GM12878 (cell line): ENCODE measurements at regions of chr7 and their contacts with region 1.

Region 1: GRCh38 chr7:129210256-129210988 is 14.4 kb upstream of the AHCYL2 start:
- DNase-seq: no peak
- ATAC-seq: peak; percentile 97
- H3K4me3 ChIP-seq: no peak overlapping the region
- H3K27ac ChIP-seq: no peak overlapping the region
- H3K4me1 ChIP-seq: no peaks in the 10 kb centered on the region
- H3K27me3 ChIP-seq: no peaks in the 10 kb centered on the region
- CTCF ChIP-seq: peak; percentile 86 to 94 (median 91)
- EP300 ChIP-seq: no peak
- POLR2A ChIP-seq: no peak
- RAD21 ChIP-seq: peak; percentile 97

Region 2: DNA sequence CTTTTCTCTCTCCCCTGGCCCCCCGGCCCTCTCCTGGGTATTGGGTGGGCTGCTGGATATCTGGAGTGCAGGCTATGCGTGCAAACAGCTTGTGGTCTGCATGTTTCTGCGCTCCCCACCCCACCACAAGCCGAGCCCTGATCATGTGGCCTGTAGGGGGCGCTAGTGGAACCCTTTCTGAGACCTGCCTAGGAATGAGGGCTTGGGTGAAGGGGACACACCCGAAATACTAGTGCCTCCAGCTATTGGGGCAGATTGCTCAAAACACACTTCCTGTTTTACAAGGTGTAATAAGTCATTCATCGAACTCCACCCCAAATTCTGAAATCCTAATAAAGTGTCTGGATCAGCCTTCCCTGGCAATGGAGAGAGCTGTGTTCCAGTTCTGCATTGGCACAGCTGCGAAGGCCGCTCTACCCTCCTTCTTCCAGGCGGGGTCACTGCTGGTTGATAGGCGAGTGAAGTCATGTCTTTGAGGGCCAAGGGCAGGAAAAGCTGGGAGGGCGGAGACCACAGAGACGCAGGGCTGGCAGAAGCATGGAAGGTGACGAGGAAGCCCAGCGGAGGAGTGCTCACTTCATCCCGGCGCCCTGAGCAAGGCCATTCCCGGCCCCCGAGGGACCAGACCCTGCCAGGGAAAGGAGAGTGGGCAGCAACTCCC is 829.1 kb before region 1 on chr7:
- CTCF ChIA-PET with region 1: no interaction called
- POLR2A ChIA-PET with region 1: no interaction called
- RAD21 ChIA-PET with region 1: no interaction called
- SMC1A ChIA-PET with region 1: no interaction called
- in situ Hi-C with region 1: no loop called
- intact Hi-C with region 1: no loop called
- DNase-seq: no peak
- ATAC-seq: peak; percentile 72
- H3K4me3 ChIP-seq: no peak overlapping the region
- H3K27ac ChIP-seq: no peak overlapping the region
- H3K4me1 ChIP-seq: no peaks in the 10 kb centered on the region
- H3K27me3 ChIP-seq: no peaks in the 10 kb centered on the region
- CTCF ChIP-seq: peak; percentile 28 to 71 (median 56)
- EP300 ChIP-seq: no peak
- POLR2A ChIP-seq: no peak
- RAD21 ChIP-seq: 0 out of 2 replicates have a peak, but pooled peaks have one; percentile 2

Region 3: DNA sequence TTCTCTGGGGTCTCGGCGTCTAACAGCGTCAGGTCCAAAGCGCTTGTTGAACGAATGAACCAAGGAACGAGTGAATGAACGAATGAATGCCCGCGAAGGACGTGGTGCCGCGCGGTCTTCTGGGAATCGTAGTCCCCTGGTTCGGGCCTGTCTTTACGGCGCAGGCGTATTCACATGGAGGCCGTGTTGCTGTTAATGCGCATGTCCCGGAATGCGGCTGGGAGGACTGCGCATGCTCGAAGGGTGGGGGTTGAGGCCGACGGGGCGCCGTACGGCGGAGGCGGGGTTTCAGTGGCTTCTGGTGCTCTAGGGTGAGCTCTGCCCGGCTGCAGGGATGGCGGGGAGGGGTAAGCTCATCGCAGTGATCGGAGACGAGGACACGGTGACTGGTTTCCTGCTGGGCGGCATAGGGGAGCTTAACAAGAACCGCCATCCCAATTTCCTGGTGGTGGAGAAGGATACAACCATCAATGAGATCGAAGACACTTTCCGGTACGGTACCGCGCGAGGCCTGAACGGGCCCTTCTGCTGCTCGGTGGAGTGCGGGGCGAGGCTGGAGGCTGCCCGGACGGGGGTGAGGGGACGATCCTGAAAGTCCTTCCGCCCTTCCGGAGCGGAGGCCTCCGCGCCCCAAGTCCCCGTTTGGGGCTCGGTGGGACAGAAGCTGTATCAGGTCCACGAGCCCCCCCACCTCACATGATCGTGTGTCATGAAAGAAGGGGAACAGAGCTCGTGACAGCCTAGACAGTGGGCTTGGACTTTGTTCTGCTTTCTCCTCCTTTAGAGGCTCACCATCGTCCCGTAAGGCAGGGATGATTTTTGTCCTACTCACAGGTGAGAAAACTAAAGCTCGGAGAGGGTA is 347.6 kb before region 1 on chr7 and contains the start of gene ATP6V1F:
- CTCF ChIA-PET with region 1: interaction called, 6 read pairs
- POLR2A ChIA-PET with region 1: no interaction called
- RAD21 ChIA-PET with region 1: interaction called, 3 read pairs
- SMC1A ChIA-PET with region 1: interaction called, 5 read pairs
- in situ Hi-C with region 1: no loop called
- intact Hi-C with region 1: loop called (anchors 1 kb)
- DNase-seq: peak; percentile 97
- ATAC-seq: peak; percentile 93
- H3K4me3 ChIP-seq: peak within 1 kb of the TSS; percentile 84
- H3K27ac ChIP-seq: peak within 1 kb of the TSS; percentile 62
- H3K4me1 ChIP-seq: peaks cover 8% of the 10 kb centered on the region; the same call in 1 of the 2 replicates
- H3K27me3 ChIP-seq: no peaks in the 10 kb centered on the region
- CTCF ChIP-seq: no peak
- EP300 ChIP-seq: no peak
- POLR2A ChIP-seq: peak; percentile 90
- RAD21 ChIP-seq: no peak
- polyA plus RNA-seq, gene ATP6V1F: 246 to 343 TPM

Region 4: DNA sequence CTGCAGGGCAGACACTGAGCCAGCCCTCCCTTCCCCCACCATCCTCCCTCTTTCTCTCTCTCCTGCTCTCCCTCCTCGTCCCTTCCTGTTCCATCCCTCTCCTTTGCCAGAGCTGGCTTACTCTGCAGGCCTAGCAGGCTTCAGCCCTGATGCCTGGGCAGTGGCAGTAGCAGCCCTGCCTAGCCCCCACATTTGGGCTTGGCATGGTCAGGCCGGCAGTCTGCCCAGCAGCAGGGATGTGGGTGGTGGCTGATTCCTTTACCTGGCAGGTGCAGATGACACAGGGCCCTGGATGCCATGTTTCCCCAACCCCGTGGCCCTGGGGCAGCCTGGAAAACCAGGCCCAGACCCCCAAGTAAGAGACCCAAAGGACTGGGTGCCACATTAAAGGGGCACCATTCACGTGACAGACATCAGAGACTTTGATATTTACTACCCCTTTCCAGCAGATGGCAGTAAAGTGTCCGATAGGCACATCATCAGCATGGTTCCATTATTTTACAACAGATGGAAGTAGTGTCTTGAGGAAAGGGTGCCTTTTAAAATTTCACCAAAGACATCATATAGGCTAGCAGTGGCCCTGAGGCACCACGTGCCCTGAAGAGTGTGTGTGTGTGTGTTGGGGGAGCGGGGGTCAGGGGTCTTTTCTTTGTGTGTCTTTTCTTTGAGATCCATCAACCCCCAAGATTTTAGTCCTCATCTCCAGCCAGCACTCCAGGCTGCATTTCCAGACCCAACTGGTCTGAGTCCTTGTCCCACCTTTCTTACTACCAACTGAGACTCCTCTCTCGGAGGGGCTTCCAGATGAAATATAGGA is 305.8 kb before region 1 on chr7:
- CTCF ChIA-PET with region 1: interaction called, 9 read pairs
- POLR2A ChIA-PET with region 1: no interaction called
- RAD21 ChIA-PET with region 1: interaction called, 3 read pairs
- SMC1A ChIA-PET with region 1: no interaction called
- in situ Hi-C with region 1: loop called (anchors 5 kb)
- intact Hi-C with region 1: loop called (anchors 1 kb)
- DNase-seq: peak; percentile 35
- ATAC-seq: peak; percentile 94
- H3K4me3 ChIP-seq: no peak overlapping the region
- H3K27ac ChIP-seq: no peak overlapping the region
- H3K4me1 ChIP-seq: peaks cover 7% of the 10 kb centered on the region
- H3K27me3 ChIP-seq: no peaks in the 10 kb centered on the region
- CTCF ChIP-seq: peak; percentile 59 to 78 (median 71)
- EP300 ChIP-seq: no peak
- POLR2A ChIP-seq: no peak
- RAD21 ChIP-seq: peak; percentile 92

Region 5: GRCh38 chr7:129101746-129102145 is 108.7 kb before region 1 on chr7:
- CTCF ChIA-PET with region 1: interaction called, 12 read pairs
- POLR2A ChIA-PET with region 1: no interaction called
- RAD21 ChIA-PET with region 1: interaction called, 5 read pairs
- SMC1A ChIA-PET with region 1: interaction called, 3 read pairs
- in situ Hi-C with region 1: no loop called
- intact Hi-C with region 1: no loop called
- DNase-seq: no peak
- ATAC-seq: no peak; the same call in 2 of the 3 replicates
- H3K4me3 ChIP-seq: no peak overlapping the region
- H3K27ac ChIP-seq: no peak overlapping the region
- H3K4me1 ChIP-seq: peaks cover 21% of the 10 kb centered on the region
- H3K27me3 ChIP-seq: no peaks in the 10 kb centered on the region
- CTCF ChIP-seq: no peak
- EP300 ChIP-seq: no peak
- POLR2A ChIP-seq: no peak
- RAD21 ChIP-seq: no peak

Region 6: GRCh38 chr7:129144095-129144833 is 66.2 kb before region 1 on chr7 and contains the start of gene TSPAN33:
- CTCF ChIA-PET with region 1: interaction called, 5 read pairs
- POLR2A ChIA-PET with region 1: no interaction called
- RAD21 ChIA-PET with region 1: interaction called, 12 read pairs
- SMC1A ChIA-PET with region 1: interaction called, 8 read pairs
- in situ Hi-C with region 1: no loop called
- intact Hi-C with region 1: no loop called
- DNase-seq: no peak
- ATAC-seq: peak; percentile 76
- H3K4me3 ChIP-seq: peak within 1 kb of the TSS; percentile 97
- H3K27ac ChIP-seq: peak within 1 kb of the TSS; percentile 92
- H3K4me1 ChIP-seq: peaks cover 28% of the 10 kb centered on the region
- H3K27me3 ChIP-seq: no peaks in the 10 kb centered on the region
- CTCF ChIP-seq: no peak
- EP300 ChIP-seq: no peak
- POLR2A ChIP-seq: peak; percentile 73
- RAD21 ChIP-seq: no peak
- polyA plus RNA-seq, gene TSPAN33: 17.8 to 30.0 TPM

Region 7: GRCh38 chr7:130205084-130205947 is 994.9 kb after region 1 on chr7 and contains the start of gene TMEM209:
- CTCF ChIA-PET with region 1: no interaction called
- POLR2A ChIA-PET with region 1: no interaction called
- RAD21 ChIA-PET with region 1: no interaction called
- SMC1A ChIA-PET with region 1: no interaction called
- in situ Hi-C with region 1: no loop called
- intact Hi-C with region 1: no loop called
- DNase-seq: peak; percentile 84
- ATAC-seq: peak; percentile 97
- H3K4me3 ChIP-seq: peak within 1 kb of the TSS; percentile 90
- H3K27ac ChIP-seq: peak within 1 kb of the TSS; percentile 96
- H3K4me1 ChIP-seq: no peaks in the 10 kb centered on the region
- H3K27me3 ChIP-seq: no peaks in the 10 kb centered on the region
- CTCF ChIP-seq: no peak
- EP300 ChIP-seq: 0 out of 4 replicates have a peak, but pooled peaks of 1 of the 2 experiments have one; percentile 23
- POLR2A ChIP-seq: peak; percentile 99
- RAD21 ChIP-seq: no peak
- polyA plus RNA-seq, gene TMEM209: 22.2 to 38.2 TPM